Mammary epithelial cell (primary cell): ENCODE measurements at regions of chr4 and their contacts with region 1.

Region 1: DNA sequence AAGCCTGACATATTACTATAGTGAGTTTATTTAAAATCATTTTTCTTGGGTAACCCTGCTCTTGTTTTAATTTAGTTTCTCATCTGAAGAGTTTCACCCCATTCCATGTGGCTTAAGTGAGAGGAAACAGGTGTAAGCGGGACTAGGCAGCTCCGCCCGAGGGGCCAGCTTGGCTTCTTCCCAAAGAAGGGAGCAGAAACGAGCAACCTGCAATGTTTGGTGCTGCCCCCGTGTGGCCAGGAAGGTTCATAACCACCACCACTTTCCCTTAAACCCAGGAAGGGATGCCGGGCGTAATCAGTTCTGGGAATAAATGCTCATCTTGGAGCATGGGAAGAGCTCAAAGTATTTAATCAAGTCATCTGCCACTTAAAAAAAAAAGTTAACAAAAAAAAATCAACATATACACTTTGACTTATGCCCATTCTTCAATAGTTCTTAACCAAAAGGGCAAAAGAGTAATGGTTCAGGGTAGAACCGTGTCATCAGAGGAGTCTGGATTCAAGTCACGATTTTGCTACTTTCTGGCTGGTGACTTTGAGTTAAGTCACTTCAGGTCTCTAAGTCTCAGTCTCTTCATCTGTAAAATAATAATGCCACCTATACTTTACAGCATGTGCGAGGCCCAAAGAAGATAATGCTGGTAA is 147.9 kb downstream of the NSUN7 start:
- DNase-seq: peak; percentile 23
- H3K4me3 ChIP-seq: no peak overlapping the region
- H3K27ac ChIP-seq: no peak overlapping the region
- H3K4me1 ChIP-seq: no peaks in the 10 kb centered on the region
- H3K27me3 ChIP-seq: no peaks in the 10 kb centered on the region
- CTCF ChIP-seq: peak; percentile 71 to 77

Region 2: GRCh38 chr4:40845154-40845835 is 52.4 kb before region 1 on chr4:
- CTCF ChIA-PET with region 1: no interaction called
- dilution Hi-C with region 1: no loop called
- in situ Hi-C with region 1: no loop called
- intact Hi-C with region 1: no loop called
- DNase-seq: no peak
- H3K4me3 ChIP-seq: no peak overlapping the region
- H3K27ac ChIP-seq: no peak overlapping the region
- H3K4me1 ChIP-seq: peaks cover 5% of the 10 kb centered on the region
- H3K27me3 ChIP-seq: no peaks in the 10 kb centered on the region
- CTCF ChIP-seq: no peak

Region 3: DNA sequence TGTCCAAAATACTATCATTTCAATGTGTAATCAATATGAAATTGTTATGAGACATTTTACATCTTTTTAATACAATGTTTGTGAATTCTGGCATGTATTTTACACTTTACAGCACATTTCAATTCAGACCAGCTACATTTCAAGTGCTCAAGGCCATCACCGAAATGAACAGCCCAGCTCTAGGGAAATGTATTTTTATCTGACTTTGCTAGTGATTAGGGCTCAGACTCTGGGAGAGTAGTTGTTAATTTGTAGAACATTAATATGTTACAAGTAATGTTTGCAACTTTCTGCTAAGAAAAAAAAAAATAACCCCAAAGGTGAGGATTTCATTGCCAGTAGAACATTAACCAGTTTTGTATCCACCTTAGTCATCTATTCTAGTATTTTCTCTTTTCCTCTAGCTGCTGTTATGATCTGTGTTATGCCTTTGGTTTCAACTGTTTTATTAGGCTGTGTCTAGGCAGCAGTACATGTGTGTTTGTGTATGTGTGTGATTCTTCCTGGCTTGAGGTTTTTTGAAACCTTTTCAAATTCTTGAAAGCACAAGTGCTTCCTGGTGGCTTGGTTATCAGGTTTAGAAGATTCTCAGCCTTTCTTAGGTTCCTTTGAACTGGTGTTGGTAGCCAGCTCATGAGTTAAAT is 22.1 kb before region 1 on chr4:
- CTCF ChIA-PET with region 1: interaction called, 16 read pairs
- dilution Hi-C with region 1: no loop called
- in situ Hi-C with region 1: no loop called
- intact Hi-C with region 1: no loop called
- DNase-seq: no peak
- H3K4me3 ChIP-seq: no peak overlapping the region
- H3K27ac ChIP-seq: no peak overlapping the region
- H3K4me1 ChIP-seq: no peaks in the 10 kb centered on the region
- H3K27me3 ChIP-seq: no peaks in the 10 kb centered on the region
- CTCF ChIP-seq: no peak